ENCODE measurements at regions of chr11 and their contacts with region 1.

Region 1: DNA sequence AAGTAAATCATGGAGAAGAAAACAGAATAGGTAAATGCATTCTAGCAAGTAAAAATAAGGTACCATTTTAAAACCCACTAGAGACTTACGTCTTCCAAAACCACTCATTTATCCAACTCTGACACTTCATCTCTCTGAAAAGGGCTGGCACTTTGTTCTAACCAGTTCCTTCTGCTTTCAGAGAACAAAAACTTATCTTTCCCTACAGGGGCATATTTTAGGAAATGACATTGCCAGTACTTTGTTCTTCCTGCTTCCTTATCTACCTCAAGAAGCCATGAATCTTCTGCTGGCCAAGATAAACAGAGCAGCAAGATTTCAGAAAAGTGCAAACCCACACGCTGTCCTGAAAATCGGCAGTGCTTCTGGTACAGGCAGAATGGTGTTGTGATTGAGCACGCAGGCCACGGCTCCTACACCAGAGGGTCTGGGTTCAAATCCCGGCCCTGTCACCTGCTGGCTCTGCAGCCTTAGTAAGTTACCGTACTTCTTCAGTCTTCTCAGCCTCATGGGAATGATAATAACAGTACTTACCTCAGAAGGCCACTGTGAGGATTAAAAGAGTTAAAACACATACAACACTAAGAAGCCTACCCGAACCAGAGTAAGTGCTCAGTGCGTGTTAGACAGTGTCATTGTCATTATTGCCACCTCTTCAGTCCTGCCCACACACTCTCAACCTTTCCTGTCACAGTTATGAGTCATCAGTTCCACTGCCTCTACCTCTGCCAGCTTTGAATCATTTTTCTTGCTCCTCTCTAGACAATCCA is 11.0 kb downstream of the MPZL3 start:
- DNase-seq: peak in 8 of 9 experiments; percentile 36 to 89 (median 69)
- ATAC-seq: peak; percentile 92
- H3K4me3 ChIP-seq: peak overlapping the region in 1 of 2 experiments; percentile 2
- H3K4me3 Mint-ChIP-seq: peak overlapping the region; percentile 56
- H3K27ac ChIP-seq: peak overlapping the region; percentile 22 to 74
- H3K27ac Mint-ChIP-seq: peak overlapping the region; percentile 85
- H3K4me1 ChIP-seq: peaks cover 35% of the 10 kb centered on the region
- H3K4me1 Mint-ChIP-seq: peaks cover 72% of the 10 kb centered on the region
- H3K27me3 ChIP-seq: no peaks in the 10 kb centered on the region
- H3K27me3 Mint-ChIP-seq: no peaks in the 10 kb centered on the region
- CTCF ChIP-seq: no peak

Region 2: DNA sequence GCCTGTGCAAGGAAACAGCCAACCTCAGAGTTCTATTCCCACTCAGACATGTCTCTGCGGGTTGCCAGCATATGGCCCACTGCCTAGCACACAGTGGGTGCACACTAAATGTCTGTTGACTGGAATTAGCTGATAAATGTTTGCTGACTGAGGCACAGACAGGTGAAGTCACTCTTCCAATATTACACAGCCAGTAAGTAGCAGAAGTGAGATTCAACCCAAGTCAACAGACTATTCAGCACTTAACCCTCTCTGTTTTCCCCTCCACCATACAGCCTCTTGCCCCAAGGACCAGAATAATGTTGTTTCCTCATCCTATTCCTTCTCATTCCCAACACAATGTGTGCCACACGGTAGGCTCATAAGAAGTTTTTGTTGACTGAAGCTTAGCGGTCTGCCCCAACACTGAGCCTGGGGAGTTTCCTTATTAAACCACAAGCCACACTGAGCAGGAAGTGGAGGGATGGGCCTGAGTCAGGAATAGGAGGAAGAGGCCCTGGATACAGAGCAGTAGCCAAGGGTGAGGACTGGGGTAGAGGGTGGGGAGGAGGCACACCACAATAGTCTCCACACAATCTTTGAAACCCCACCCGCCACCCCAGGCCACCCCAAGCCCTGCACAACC is 270.7 kb before region 1 on chr11:
- CTCF ChIA-PET with region 1: no interaction called
- POLR2A ChIA-PET with region 1: no interaction called
- intact Hi-C with region 1: no loop called
- DNase-seq: peak in 2 of 9 experiments; percentile 65 to 77
- ATAC-seq: peak; percentile 53
- H3K4me3 ChIP-seq: peak overlapping the region in 1 of 2 experiments; percentile 28
- H3K4me3 Mint-ChIP-seq: peak overlapping the region; percentile 35
- H3K27ac ChIP-seq: peak overlapping the region in 1 of 2 experiments; percentile 57
- H3K27ac Mint-ChIP-seq: peak overlapping the region; percentile 67
- H3K4me1 ChIP-seq: peaks cover 52% of the 10 kb centered on the region
- H3K4me1 Mint-ChIP-seq: peaks cover 61% of the 10 kb centered on the region
- H3K27me3 ChIP-seq: no peaks in the 10 kb centered on the region
- H3K27me3 Mint-ChIP-seq: no peaks in the 10 kb centered on the region
- CTCF ChIP-seq: no peak

Region 3: GRCh38 chr11:118251858-118252652 is 10.9 kb after region 1 on chr11 and contains the start of gene MPZL3:
- CTCF ChIA-PET with region 1: interaction called, 7 read pairs
- POLR2A ChIA-PET with region 1: interaction called, 17 read pairs
- intact Hi-C with region 1: loop called in 1 of 2 experiments (anchors 1 kb)
- DNase-seq: peak; percentile 74 to 96 (median 87)
- ATAC-seq: peak; percentile 75
- H3K4me3 ChIP-seq: peak within 1 kb of the TSS; percentile 67 to 94
- H3K4me3 Mint-ChIP-seq: peak within 1 kb of the TSS; percentile 98
- H3K27ac ChIP-seq: peak within 1 kb of the TSS; percentile 93 to 97
- H3K27ac Mint-ChIP-seq: peak within 1 kb of the TSS; percentile 100
- H3K4me1 ChIP-seq: peaks cover 8% of the 10 kb centered on the region
- H3K4me1 Mint-ChIP-seq: peaks cover 41% of the 10 kb centered on the region
- H3K27me3 ChIP-seq: no peaks in the 10 kb centered on the region
- H3K27me3 Mint-ChIP-seq: no peaks in the 10 kb centered on the region
- CTCF ChIP-seq: no peak
- total RNA-seq, gene MPZL3: 15.3 to 16.8 TPM

Region 4: DNA sequence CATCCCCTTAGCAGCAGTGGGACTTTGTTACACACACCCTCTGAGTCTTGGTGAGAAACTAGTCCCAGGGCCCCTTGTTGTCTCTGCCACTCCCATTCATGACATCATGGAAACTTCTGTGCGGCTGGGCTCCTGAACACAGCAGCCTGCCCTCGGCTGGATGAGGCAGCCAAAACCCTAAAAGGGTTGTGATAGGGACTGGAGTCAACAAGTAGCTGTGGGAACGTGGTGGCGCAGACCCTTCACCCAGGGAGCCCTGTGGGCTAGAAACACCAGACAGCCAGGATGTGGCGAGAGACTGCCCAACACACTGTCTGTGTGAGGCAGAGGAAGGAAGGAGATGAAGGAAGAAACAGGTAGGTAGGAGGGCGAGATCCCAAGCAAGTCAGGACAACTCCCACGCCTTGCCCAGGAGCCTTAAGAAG is 97.5 kb after region 1 on chr11:
- CTCF ChIA-PET with region 1: no interaction called
- POLR2A ChIA-PET with region 1: no interaction called
- intact Hi-C with region 1: no loop called
- DNase-seq: peak; percentile 67 to 97 (median 91)
- ATAC-seq: peak; percentile 63
- H3K4me3 ChIP-seq: peak overlapping the region; percentile 87 to 92
- H3K4me3 Mint-ChIP-seq: peak overlapping the region; percentile 93
- H3K27ac ChIP-seq: peak overlapping the region; percentile 72 to 94
- H3K27ac Mint-ChIP-seq: peak overlapping the region; percentile 99
- H3K4me1 ChIP-seq: peaks cover 64% of the 10 kb centered on the region
- H3K4me1 Mint-ChIP-seq: peaks cover 74% of the 10 kb centered on the region
- H3K27me3 ChIP-seq: no peaks in the 10 kb centered on the region
- H3K27me3 Mint-ChIP-seq: no peaks in the 10 kb centered on the region
- CTCF ChIP-seq: no peak

Measured in CD8-positive, alpha-beta T cell (primary cell).